ENCODE measurements at regions of chr1 and their contacts with region 1.

Region 1: GRCh38 chr1:147579532-147579931 is 38.2 kb downstream of the BCL9 start:
- DNase-seq: no peak
- H3K4me3 Mint-ChIP-seq: peak overlapping the region; percentile 38
- H3K27ac Mint-ChIP-seq: peak overlapping the region; percentile 63
- H3K4me1 Mint-ChIP-seq: peaks cover 18% of the 10 kb centered on the region
- H3K27me3 Mint-ChIP-seq: peaks cover 45% of the 10 kb centered on the region

Region 2: GRCh38 chr1:147292631-147293251 is 286.8 kb before region 1 on chr1:
- intact Hi-C with region 1: no loop called
- DNase-seq: no peak
- H3K4me3 Mint-ChIP-seq: no peak overlapping the region
- H3K27ac Mint-ChIP-seq: no peak overlapping the region
- H3K4me1 Mint-ChIP-seq: peaks cover 13% of the 10 kb centered on the region
- H3K27me3 Mint-ChIP-seq: no peaks in the 10 kb centered on the region

Region 3: DNA sequence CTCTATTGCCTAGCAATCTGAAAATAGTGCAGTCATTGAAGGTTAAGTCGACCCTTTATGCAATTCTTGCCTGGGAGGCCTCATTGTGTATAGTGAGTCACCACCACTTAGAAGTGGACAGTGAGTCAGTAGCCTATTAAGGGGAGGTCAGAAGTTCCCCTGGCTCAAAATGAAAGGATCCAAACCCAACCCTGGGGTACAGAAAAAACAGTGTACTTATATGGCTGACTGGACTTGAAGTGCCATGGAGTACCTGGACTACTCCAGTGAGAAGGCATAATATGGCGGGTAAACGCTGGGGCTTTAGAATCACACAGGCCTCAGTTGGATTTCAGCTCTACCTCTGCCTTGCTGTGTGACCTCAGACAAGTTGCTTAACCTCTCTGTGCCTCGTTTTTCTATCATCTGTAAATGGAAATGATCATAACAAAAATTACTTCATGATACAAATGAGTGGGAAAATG is 40.4 kb before region 1 on chr1:
- intact Hi-C with region 1: loop called (anchors 5 kb)
- DNase-seq: no peak
- H3K4me3 Mint-ChIP-seq: no peak overlapping the region
- H3K27ac Mint-ChIP-seq: no peak overlapping the region
- H3K4me1 Mint-ChIP-seq: peaks cover 29% of the 10 kb centered on the region
- H3K27me3 Mint-ChIP-seq: peaks cover 5% of the 10 kb centered on the region

Region 4: DNA sequence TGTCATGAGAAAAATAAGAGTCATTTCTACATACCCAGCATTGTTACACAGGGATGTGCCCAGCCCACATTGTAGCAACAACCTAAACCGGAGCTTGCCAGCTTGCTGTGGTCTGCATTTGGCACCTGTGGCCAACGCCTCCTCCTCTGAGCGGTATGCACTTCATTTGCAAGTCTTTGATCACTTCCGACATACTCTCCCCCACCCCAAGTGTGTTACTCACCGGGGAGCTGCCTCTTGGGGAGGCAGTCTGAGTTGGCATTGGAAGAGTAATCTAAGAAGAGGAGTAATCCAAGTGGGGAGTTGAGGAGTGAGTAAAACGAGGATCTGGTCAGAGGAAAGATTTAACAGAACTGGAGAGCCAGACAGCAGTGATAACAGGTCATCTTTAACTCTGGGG is 34.4 kb before region 1 on chr1:
- intact Hi-C with region 1: loop called (anchors 5 kb)
- DNase-seq: peak; percentile 90
- H3K4me3 Mint-ChIP-seq: peak overlapping the region; percentile 77
- H3K27ac Mint-ChIP-seq: peak overlapping the region; percentile 84
- H3K4me1 Mint-ChIP-seq: peaks cover 51% of the 10 kb centered on the region
- H3K27me3 Mint-ChIP-seq: no peaks in the 10 kb centered on the region

Region 5: DNA sequence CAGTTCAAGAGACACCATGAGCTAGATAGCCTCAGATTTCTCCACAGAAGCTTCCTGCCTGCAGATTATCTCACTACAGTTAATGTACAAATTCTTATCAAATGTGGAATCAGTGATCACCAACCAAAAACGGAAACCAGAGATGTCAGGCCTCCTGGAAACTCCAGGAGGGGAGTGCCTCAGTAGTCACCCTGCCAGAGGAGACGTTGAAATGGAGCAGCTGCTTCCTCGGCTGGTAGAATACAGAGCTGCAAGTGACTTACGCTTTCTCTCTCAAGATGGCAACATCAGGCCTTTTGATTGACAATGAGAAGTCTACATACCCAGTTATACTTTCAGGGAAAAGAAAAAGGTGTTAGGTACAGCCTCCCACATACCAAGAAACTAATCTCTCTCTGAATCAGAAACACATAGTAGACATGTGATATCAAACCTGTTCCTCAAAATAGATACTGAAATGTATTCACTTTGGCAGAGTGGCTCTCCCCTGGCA is 38.6 kb after region 1 on chr1:
- intact Hi-C with region 1: loop called (anchors 5 kb)
- DNase-seq: peak; percentile 87
- H3K4me3 Mint-ChIP-seq: peak overlapping the region; percentile 47
- H3K27ac Mint-ChIP-seq: peak overlapping the region; percentile 61
- H3K4me1 Mint-ChIP-seq: peaks cover 33% of the 10 kb centered on the region
- H3K27me3 Mint-ChIP-seq: no peaks in the 10 kb centered on the region